A673 (cell line): ENCODE measurements at regions of chr3 and their contacts with region 1.

Region 1: DNA sequence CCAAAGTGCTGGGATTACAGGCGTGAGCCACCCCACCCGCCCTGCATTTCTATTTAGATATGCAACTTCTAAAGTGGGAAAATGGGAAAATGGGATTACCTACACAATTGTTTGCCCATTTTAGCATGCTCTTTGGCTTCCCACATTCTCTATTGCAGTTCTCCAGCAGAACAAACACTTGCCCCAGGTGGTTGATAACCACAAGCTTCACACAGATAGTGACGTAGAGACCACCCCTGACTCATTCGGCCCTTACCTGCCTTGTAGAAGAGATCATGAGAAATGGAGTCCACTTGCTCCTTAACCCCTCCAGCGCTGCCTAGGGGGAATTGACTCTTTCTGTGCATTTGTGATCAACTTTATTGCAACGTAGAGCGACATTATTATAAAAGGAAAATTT is 83.2 kb upstream of the RAP2B start:
- DNase-seq: no peak
- H3K4me3 ChIP-seq: no peak overlapping the region
- H3K27ac ChIP-seq: no peak overlapping the region
- H3K4me1 ChIP-seq: peaks cover 11% of the 10 kb centered on the region
- H3K27me3 ChIP-seq: no peaks in the 10 kb centered on the region
- CTCF ChIP-seq: no peak

Region 2: DNA sequence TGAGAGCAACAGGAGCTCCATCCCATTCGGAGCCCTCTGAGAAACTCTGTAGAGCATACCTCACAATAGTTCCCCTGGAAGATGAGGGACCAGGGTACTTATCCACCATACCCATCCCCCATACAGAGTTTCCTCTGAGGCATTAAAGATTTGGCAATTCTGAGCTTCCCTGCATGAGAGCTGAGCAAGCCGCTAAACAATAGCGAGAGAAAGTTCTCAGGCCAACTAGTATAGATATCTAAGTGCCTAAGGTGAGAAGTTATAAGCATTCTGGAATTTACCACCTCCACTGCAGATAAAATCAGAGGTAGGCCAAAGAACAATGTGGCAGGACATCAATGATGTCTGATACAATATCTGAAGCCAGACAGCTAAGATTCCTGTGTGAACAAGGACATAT is 939.2 kb before region 1 on chr3:
- CTCF ChIA-PET with region 1: no interaction called
- POLR2A ChIA-PET with region 1: no interaction called
- intact Hi-C with region 1: no loop called
- DNase-seq: no peak
- H3K4me3 ChIP-seq: no peak overlapping the region
- H3K27ac ChIP-seq: no peak overlapping the region
- H3K4me1 ChIP-seq: no peaks in the 10 kb centered on the region
- H3K27me3 ChIP-seq: no peaks in the 10 kb centered on the region
- CTCF ChIP-seq: no peak

Region 3: DNA sequence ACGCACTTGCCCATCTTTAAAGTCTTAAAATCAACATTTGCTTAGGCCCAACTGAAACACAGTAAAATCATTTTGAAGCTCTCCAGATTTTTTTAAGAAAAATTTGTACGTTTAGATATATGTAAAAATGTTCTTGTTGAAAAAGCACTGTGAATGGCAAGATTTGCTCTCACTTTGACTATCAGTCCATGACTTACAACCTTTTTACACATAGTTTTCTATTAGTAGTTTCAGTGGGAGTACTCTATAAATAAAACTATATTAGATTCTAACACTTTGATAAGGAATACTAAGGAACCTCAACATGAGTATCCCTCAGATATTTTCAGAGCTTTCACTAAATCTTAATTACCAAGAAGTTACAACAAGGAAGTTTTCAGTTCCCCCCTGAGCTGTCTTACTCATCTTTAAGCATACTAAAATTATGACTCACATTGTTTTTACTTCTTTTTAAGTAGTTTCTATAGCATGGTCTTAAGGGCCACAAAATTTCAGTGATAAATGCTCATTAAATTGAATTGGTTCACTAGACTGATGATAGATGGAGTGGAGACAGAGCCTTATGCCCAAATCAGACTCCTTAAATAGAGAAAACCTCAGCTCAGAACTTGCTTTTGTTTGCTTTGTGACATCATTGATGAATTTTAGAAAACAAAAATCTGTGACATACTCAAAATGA is 51.6 kb after region 1 on chr3:
- CTCF ChIA-PET with region 1: no interaction called
- POLR2A ChIA-PET with region 1: interaction called, 10 read pairs
- intact Hi-C with region 1: no loop called
- DNase-seq: peak; percentile 41
- H3K4me3 ChIP-seq: no peak overlapping the region
- H3K27ac ChIP-seq: no peak overlapping the region
- H3K4me1 ChIP-seq: peaks cover 6% of the 10 kb centered on the region
- H3K27me3 ChIP-seq: no peaks in the 10 kb centered on the region
- CTCF ChIP-seq: no peak

Region 4: GRCh38 chr3:153574445-153574844 is 495.6 kb after region 1 on chr3:
- CTCF ChIA-PET with region 1: no interaction called
- POLR2A ChIA-PET with region 1: no interaction called
- intact Hi-C with region 1: no loop called
- DNase-seq: no peak
- H3K4me3 ChIP-seq: no peak overlapping the region
- H3K27ac ChIP-seq: no peak overlapping the region
- H3K4me1 ChIP-seq: no peaks in the 10 kb centered on the region
- H3K27me3 ChIP-seq: peaks cover 3% of the 10 kb centered on the region
- CTCF ChIP-seq: no peak

Region 5: DNA sequence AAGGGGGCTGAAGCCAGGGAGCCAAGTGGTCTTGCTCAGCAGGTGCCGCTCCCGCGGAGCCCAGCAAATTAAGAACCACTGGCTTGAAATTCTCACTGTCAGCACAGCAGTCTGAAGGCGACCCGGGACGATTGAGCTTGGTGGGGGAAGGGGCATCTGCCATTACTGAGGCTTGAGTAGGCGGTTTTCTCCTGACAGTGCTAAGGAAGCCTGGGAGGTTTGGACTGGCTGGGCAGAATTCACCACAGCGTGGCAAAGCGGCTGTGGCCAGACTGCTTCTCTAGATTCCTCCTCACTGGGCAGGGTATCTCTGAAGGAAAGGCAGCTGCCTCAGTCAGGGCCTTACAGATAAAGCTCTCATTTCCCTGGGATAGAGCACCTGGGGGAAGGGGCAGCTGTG is 1408.1 kb after region 1 on chr3:
- CTCF ChIA-PET with region 1: no interaction called
- POLR2A ChIA-PET with region 1: no interaction called
- intact Hi-C with region 1: no loop called
- DNase-seq: no peak
- H3K4me3 ChIP-seq: no peak overlapping the region
- H3K27ac ChIP-seq: no peak overlapping the region
- H3K4me1 ChIP-seq: no peaks in the 10 kb centered on the region
- H3K27me3 ChIP-seq: no peaks in the 10 kb centered on the region
- CTCF ChIP-seq: no peak